Common myeloid progenitor, CD34-positive (primary cell): ENCODE measurements at regions of chr2 and their contacts with region 1.

Region 1: GRCh38 chr2:236569573-236569973 is at the start of gene ACKR3:
- DNase-seq: peak; percentile 84 to 95 (median 95)
- H3K4me3 ChIP-seq: peak within 1 kb of the TSS in 6 of 7 experiments; percentile 14 to 85 (median 70)
- H3K27ac ChIP-seq: no peak within 1 kb of the TSS
- H3K4me1 ChIP-seq: peaks cover 8 to 31% (median 28%) of the 10 kb centered on the region in 4 experiments
- H3K27me3 ChIP-seq: no peaks in the 10 kb centered on the region

Region 2: GRCh38 chr2:236452238-236452637 is 117.3 kb before region 1 on chr2:
- CTCF ChIA-PET with region 1: interaction called, 12 read pairs
- POLR2A ChIA-PET with region 1: no interaction called
- DNase-seq: no peak
- H3K4me3 ChIP-seq: no peak overlapping the region
- H3K27ac ChIP-seq: no peak overlapping the region
- H3K4me1 ChIP-seq: no peaks in the 10 kb centered on the region
- H3K27me3 ChIP-seq: peaks cover 0 to 2% (median 0%) of the 10 kb centered on the region in 5 experiments

Region 3: DNA sequence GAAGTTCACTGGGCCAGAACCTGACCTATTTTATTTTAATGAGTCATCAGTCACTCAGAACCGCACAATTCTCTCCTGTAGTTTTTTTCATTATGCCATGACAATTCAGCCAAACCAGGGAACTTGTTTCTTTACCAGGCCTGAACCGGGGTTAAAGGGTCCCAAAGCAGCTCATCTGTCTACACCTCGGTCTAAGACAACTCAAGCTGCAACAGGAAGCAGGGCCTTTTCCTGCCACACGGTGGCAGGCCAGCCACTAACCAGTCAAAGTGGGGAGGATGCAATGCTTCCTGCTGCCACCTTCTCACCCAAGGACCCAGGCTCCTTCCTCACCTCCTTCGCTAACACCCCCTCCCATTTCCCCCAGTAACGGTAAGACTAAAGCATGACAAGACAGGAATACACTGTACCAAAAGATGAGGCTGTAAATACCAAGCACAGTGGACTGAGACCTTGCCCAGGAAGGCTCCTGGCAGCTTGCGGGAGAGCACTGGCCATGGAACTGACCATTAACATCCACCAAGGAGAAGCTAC is 56.6 kb before region 1 on chr2:
- CTCF ChIA-PET with region 1: interaction called, 145 read pairs
- POLR2A ChIA-PET with region 1: interaction called, 4 read pairs
- DNase-seq: peak; percentile 67 to 81 (median 79)
- H3K4me3 ChIP-seq: no peak overlapping the region
- H3K27ac ChIP-seq: no peak overlapping the region
- H3K4me1 ChIP-seq: peaks cover 6 to 22% (median 16%) of the 10 kb centered on the region in 4 experiments
- H3K27me3 ChIP-seq: peaks cover 0 to 2% (median 0%) of the 10 kb centered on the region in 5 experiments

Region 4: DNA sequence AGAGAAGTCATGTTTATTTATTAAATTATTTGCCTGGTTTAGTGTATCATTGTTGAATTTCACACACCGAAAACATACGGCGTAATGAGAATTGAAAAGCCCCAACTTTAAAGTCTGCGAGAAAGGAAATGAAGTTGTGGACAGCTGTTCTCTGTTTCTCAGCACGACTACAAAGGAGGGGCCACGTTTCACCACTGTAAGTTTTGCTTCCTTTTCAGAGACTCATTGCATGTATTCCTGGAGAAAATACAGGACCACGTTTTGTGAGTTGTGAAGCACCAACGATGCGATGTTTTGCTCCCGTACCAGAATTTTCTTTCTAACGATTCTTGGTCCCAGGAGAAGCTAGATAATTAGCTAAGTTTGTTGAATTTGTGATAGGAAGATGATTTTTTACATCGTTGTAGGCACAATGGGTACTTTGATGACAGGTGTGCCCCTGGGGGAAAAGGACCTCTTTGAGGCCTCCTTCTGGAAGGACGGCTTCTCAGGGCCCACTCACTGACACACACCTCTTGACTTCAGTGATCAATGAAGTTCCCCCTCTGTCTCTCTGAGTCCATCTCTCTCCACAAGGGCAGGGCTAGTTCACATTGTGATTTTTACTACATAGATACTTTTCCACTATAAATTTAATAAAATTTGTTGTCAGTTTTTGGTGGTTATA is 23.6 kb before region 1 on chr2:
- CTCF ChIA-PET with region 1: interaction called, 16 read pairs
- POLR2A ChIA-PET with region 1: interaction called, 5 read pairs
- DNase-seq: peak; percentile 49 to 86 (median 77)
- H3K4me3 ChIP-seq: peak overlapping the region in 4 of 7 experiments; percentile 2 to 34 (median 18)
- H3K27ac ChIP-seq: peak overlapping the region; percentile 44 to 76
- H3K4me1 ChIP-seq: peaks cover 30 to 79% (median 63%) of the 10 kb centered on the region in 4 experiments
- H3K27me3 ChIP-seq: no peaks in the 10 kb centered on the region

Region 5: GRCh38 chr2:236715491-236715961 is 146.0 kb after region 1 on chr2:
- CTCF ChIA-PET with region 1: no interaction called
- POLR2A ChIA-PET with region 1: no interaction called
- DNase-seq: no peak
- H3K4me3 ChIP-seq: no peak overlapping the region
- H3K27ac ChIP-seq: no peak overlapping the region
- H3K4me1 ChIP-seq: peaks cover 0 to 7% (median 0%) of the 10 kb centered on the region in 4 experiments
- H3K27me3 ChIP-seq: peaks cover 0 to 28% (median 9%) of the 10 kb centered on the region in 5 experiments